ENCODE measurements at regions of chr7 and their contacts with region 1.

Region 1: DNA sequence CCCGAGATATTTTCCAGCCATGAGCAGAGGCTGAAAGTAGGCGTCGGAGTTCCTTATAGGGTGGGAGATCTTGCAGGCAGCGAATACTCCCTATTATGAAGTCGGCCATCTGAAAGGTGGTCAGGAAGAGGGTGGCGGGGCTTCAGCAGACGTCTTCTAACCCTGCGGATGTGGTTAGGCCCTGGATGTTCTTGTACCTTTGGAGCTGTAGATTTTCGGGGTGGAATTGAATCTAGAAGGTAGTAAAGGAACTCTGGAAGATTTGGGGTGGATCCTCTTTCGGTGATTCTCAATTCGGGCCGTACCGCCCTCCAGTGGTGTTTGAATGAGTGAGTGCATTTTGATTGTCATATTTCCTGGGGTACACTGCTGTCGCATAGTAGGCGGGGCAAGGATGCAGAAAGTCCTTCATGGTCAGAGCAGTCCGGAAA is 635 bp downstream of the NUP205 start:
- DNase-seq: peak; percentile 29 to 85 (median 52)
- ATAC-seq: peak; percentile 57
- H3K4me3 ChIP-seq: peak overlapping the region; percentile 99
- H3K4me3 Mint-ChIP-seq: no peak overlapping the region
- H3K27ac ChIP-seq: peak overlapping the region; percentile 93 to 99
- H3K27ac Mint-ChIP-seq: no peak overlapping the region
- H3K4me1 ChIP-seq: peaks cover 13% of the 10 kb centered on the region
- H3K4me1 Mint-ChIP-seq: peaks cover 20% of the 10 kb centered on the region
- H3K27me3 ChIP-seq: no peaks in the 10 kb centered on the region
- H3K27me3 Mint-ChIP-seq: no peaks in the 10 kb centered on the region
- CTCF ChIP-seq: peak; percentile 57

Region 2: GRCh38 chr7:134316539-134317344 is 1241.6 kb before region 1 on chr7 and contains the start of gene SLC35B4:
- CTCF ChIA-PET with region 1: no interaction called
- POLR2A ChIA-PET with region 1: no interaction called
- intact Hi-C with region 1: loop called in 1 of 2 experiments (anchors 5 kb)
- DNase-seq: peak; percentile 90 to 97 (median 92)
- ATAC-seq: peak; percentile 96
- H3K4me3 ChIP-seq: peak within 1 kb of the TSS; percentile 98
- H3K4me3 Mint-ChIP-seq: peak within 1 kb of the TSS; percentile 93
- H3K27ac ChIP-seq: peak within 1 kb of the TSS; percentile 36 to 65
- H3K27ac Mint-ChIP-seq: peak within 1 kb of the TSS; percentile 77
- H3K4me1 ChIP-seq: peaks cover 15% of the 10 kb centered on the region
- H3K4me1 Mint-ChIP-seq: peaks cover 26% of the 10 kb centered on the region
- H3K27me3 ChIP-seq: no peaks in the 10 kb centered on the region
- H3K27me3 Mint-ChIP-seq: no peaks in the 10 kb centered on the region
- CTCF ChIP-seq: peak; percentile 27
- total RNA-seq, gene SLC35B4: 5.8 to 7.8 TPM

Region 3: DNA sequence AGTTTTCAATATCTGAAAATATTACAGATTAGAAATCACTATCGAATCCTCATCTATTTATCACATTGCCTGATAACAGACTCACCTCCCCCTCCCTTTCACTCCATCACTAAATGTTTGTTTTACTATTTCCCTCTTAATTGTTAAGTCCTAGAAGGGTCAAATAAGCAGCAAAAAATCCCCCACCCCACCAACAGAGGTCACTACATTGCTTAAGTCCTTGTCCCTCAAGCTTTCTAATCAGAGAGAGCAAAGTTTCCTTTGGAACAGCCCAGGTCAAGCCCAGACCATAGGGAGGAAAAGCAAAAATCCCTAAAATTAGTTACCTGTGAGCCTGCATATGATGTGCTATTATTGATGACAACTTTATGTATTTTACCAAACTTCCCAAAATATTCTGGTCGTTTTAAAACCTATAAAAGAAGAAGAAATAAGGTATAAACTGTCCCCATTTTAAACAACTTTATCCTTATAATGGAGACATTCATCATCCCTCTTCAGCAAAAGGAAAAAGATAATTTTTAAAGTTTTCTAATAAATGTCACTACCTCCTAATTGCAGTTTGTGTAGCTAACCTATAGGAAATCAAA is 143.4 kb before region 1 on chr7:
- CTCF ChIA-PET with region 1: no interaction called
- POLR2A ChIA-PET with region 1: no interaction called
- intact Hi-C with region 1: loop called in 1 of 2 experiments (anchors 1 kb)
- DNase-seq: peak in 4 of 14 experiments; percentile 24 to 47 (median 32)
- ATAC-seq: peak; percentile 37
- H3K4me3 ChIP-seq: no peak overlapping the region
- H3K4me3 Mint-ChIP-seq: no peak overlapping the region
- H3K27ac ChIP-seq: no peak overlapping the region
- H3K27ac Mint-ChIP-seq: no peak overlapping the region
- H3K4me1 ChIP-seq: no peaks in the 10 kb centered on the region
- H3K4me1 Mint-ChIP-seq: peaks cover 6% of the 10 kb centered on the region
- H3K27me3 ChIP-seq: no peaks in the 10 kb centered on the region
- H3K27me3 Mint-ChIP-seq: no peaks in the 10 kb centered on the region
- CTCF ChIP-seq: peak; percentile 56

Region 4: DNA sequence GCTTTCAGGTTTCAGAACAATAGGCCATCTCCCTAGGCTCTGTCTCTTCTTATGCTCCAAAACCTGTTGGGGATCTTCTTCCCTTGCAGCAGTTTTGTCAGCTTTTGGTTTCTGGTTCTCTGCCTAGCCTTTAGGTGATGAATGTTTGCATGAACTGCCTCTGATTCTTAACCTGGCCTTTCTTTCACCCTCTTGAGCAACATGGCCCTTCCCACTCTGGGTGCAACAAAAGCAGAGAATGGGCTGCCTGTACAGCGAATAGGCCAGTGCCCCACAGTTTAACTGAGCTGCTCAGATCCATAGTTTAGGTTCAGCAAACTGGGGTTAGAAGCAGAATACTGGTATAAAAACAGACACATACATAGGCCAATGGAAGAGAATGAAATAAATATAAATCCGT is 18.7 kb before region 1 on chr7:
- CTCF ChIA-PET with region 1: no interaction called
- POLR2A ChIA-PET with region 1: no interaction called
- intact Hi-C with region 1: no loop called
- DNase-seq: no peak
- ATAC-seq: no peak
- H3K4me3 ChIP-seq: no peak overlapping the region
- H3K4me3 Mint-ChIP-seq: no peak overlapping the region
- H3K27ac ChIP-seq: no peak overlapping the region
- H3K27ac Mint-ChIP-seq: no peak overlapping the region
- H3K4me1 ChIP-seq: no peaks in the 10 kb centered on the region
- H3K4me1 Mint-ChIP-seq: no peaks in the 10 kb centered on the region
- H3K27me3 ChIP-seq: no peaks in the 10 kb centered on the region
- H3K27me3 Mint-ChIP-seq: peaks cover 22% of the 10 kb centered on the region
- CTCF ChIP-seq: no peak

Region 5: DNA sequence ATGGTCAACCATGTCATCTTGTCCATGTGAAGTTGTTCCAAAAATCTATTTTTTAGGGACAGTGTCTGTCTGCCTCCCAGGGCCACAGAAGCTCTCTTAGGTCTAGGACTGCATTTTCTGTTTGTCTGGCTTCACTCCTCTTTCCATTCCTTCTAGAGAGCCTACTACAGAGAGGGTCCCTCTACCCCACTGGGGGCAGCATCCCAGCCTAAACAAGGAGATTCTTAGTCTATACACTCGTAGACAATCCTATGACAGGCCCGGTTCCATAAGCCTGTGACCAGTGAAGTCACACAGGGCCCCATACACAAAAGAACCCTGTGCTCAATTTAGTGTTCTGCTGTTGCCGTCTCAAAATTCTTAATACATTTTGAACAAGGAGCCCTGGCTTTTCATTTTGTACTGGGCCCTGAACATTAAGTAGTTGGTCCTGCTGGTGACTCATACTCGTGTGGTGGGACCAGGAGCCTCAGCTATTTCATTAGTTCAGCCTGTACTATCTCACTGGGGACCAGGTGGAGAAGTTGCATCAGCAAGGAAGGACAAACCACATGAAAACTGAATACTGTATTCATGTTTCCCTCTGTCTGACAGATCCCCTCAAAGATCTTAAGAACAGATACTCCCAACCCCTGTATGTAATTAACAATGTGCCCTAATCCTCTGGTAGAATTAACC is 213.7 kb after region 1 on chr7:
- CTCF ChIA-PET with region 1: no interaction called
- POLR2A ChIA-PET with region 1: no interaction called
- intact Hi-C with region 1: no loop called
- DNase-seq: no peak
- ATAC-seq: no peak
- H3K4me3 ChIP-seq: no peak overlapping the region
- H3K4me3 Mint-ChIP-seq: no peak overlapping the region
- H3K27ac ChIP-seq: no peak overlapping the region
- H3K27ac Mint-ChIP-seq: no peak overlapping the region
- H3K4me1 ChIP-seq: no peaks in the 10 kb centered on the region
- H3K4me1 Mint-ChIP-seq: no peaks in the 10 kb centered on the region
- H3K27me3 ChIP-seq: peaks cover under 1 to 3% of the 10 kb centered on the region in 2 experiments
- H3K27me3 Mint-ChIP-seq: peaks cover 18% of the 10 kb centered on the region
- CTCF ChIP-seq: no peak

Measured in CD4-positive, alpha-beta T cell (primary cell).